Left lung (tissue), 14 donors: ENCODE measurements at regions of chr9 and their contacts with region 1.

Region 1: DNA sequence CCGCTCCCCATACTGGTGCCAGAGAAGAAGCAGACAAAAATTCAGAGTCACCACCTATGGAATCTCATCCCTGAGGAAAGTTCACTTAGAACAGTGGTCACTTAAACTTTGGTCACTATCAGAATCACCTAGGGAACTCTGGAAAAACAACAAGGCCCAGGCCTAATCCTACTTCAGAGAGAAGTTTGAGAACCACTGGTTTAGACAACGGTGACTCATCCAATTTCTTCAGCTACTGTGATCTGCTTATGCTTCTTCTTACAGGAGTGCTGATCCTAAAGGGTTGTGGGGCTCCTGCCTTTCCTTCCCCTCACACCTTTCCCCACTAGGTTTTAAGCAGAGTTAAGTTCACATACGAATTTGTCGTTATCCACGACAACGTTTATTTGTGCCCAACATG is 194.7 kb upstream of the KLF4 start:
- DNase-seq: no peak
- ATAC-seq: peak; percentile 32
- H3K4me3 ChIP-seq: no peak overlapping the region
- H3K27ac ChIP-seq: peak overlapping the region in 1 of 2 donors; percentile 74
- H3K4me1 ChIP-seq: peaks cover 0 to 16% of the 10 kb centered on the region in 2 donors
- H3K27me3 ChIP-seq: no peaks in the 10 kb centered on the region
- CTCF ChIP-seq: no peak

Region 2: GRCh38 chr9:107584186-107584585 is 100.0 kb before region 1 on chr9:
- intact Hi-C with region 1: no loop called
- DNase-seq: no peak
- ATAC-seq: no peak
- H3K4me3 ChIP-seq: no peak overlapping the region
- H3K27ac ChIP-seq: peak overlapping the region in 1 of 2 donors; percentile 33
- H3K4me1 ChIP-seq: peaks cover 0 to 26% of the 10 kb centered on the region in 2 donors
- H3K27me3 ChIP-seq: no peaks in the 10 kb centered on the region
- CTCF ChIP-seq: no peak

Region 3: GRCh38 chr9:107624234-107624960 is 59.8 kb before region 1 on chr9:
- intact Hi-C with region 1: loop called in 1 of 2 experiments (anchors 10 kb)
- DNase-seq: no peak
- ATAC-seq: peak; percentile 41
- H3K4me3 ChIP-seq: no peak overlapping the region
- H3K27ac ChIP-seq: no peak overlapping the region
- H3K4me1 ChIP-seq: no peaks in the 10 kb centered on the region
- H3K27me3 ChIP-seq: no peaks in the 10 kb centered on the region
- CTCF ChIP-seq: no peak